Right ventricle myocardium inferior (tissue), 1 donor: ENCODE measurements at regions of chr10 and their contacts with region 1.

Region 1: GRCh38 chr10:124741281-124741921 is 2.8 kb downstream of the FAM53B start:
- DNase-seq: peak; percentile 90
- ATAC-seq: peak; percentile 72

Region 2: DNA sequence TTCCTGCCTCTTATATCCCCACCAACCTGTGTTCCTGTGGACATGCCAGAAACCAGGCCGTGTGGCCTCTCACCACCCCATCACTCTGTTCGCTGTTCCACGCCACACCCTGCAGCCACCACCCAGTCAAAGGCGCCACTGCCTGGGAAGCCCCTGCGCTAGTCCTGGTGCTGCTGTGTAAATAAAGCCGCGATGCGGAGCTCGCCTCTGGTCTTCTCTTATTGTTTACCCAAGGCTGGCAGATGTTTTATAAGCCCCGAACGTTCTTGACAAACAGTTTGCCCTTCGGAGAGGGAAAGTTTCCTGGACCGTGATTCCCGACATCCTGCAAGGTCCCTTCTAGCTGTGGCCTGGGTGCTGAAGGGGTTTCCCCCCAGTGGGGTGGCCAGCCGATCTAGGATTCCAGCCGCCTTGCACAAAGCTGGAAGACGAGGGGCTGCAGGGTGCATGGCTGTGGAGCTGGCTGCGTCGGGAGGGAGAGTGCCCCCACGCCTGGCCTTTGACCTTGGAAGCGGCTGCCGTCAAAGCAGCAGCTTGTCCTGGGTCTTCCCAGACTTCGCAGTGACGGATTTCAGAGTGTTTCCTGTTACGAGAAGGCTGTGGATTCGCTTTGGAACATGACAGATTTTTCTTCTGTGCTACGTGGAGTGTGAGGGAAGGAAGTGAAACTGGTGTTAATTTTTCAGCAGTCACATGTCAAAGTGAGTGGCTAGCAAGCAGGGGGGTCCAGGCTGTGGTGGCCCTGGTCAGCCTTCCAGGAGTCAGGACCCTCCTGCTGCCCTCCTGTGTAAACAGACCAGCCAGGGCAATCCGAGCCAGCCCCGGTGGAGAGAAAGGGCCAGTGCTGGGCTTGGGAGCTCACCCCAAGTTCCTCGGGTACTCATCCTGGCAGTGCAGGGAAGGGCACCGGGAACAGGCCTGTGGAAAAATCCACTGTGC is 218.2 kb before region 1 on chr10:
- intact Hi-C with region 1: no loop called
- DNase-seq: no peak
- ATAC-seq: no peak

Region 3: DNA sequence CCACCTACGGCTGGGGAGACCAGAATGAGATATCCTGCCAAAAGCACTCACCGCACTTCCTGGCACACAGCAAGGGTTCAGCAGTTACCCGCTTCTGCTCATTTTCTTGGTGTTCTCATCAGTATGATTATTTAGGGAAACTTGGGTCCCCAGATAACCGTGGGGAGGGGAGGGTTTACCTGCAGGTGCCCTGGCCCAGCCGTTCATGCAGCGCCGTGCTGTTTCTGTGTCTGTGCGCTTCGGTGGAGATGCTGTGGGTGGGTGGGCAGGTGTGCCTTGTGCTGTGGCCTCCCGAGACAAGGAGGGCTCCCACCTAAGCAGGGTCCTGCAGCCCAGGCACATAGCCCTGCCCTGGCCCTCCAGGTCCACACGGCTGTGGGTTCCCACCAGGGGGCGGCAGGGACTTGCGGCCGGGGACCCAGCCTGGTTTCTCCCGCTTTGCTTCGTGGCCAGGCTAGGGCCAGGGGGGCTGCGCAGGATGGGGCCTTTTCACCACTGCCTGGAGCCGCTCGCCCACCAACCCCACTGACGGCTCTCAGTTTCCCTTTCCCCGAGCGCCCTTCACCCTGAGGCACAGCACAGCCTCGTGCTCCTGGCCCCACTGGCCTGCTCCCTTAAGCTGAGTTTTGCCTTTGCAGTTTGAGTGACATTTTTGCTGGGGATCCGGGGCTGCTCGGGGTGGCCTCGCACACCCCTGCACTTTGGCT is 201.3 kb before region 1 on chr10:
- intact Hi-C with region 1: loop called (anchors 1 kb)
- DNase-seq: peak; percentile 86
- ATAC-seq: peak; percentile 87

Region 4: GRCh38 chr10:124619802-124620490 is 121.5 kb before region 1 on chr10:
- intact Hi-C with region 1: loop called (anchors 2 kb)
- DNase-seq: no peak
- ATAC-seq: no peak

Region 5: DNA sequence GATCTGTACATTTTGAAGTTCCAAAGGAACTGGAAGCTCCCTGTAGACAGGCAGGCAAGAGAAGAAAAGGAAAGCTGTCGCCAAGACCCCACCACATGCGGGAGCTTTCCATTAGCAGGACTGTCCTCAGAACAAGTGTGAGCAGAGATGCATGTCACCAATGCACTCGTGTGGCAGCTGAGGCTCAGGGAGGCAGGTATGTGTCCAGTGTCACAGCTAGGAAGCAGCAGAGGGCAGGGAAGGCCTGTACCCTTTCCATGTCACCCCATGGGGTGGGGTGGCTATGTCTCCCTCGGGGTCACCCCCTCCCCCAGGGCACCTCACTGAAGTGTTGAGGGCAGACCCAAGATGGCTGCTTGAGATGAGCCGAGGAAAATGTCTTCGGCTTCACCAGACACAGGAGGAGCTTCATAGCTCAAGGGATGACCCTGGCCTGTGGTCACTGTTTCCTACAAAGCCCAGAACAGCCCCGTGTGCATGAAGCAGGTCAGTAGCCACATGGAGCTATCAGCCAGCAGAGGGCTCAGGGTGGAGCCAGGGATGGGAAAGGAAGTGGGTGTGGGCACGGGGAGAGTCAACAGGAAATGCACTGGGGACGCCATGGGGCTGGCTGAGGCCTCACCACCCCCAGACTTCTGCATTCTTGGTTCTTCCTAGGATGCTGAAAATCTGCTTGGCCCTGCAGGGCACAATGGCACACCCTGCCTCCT is 93.8 kb before region 1 on chr10:
- intact Hi-C with region 1: loop called (anchors 5 kb)
- DNase-seq: peak; percentile 92
- ATAC-seq: peak; percentile 57

Region 6: DNA sequence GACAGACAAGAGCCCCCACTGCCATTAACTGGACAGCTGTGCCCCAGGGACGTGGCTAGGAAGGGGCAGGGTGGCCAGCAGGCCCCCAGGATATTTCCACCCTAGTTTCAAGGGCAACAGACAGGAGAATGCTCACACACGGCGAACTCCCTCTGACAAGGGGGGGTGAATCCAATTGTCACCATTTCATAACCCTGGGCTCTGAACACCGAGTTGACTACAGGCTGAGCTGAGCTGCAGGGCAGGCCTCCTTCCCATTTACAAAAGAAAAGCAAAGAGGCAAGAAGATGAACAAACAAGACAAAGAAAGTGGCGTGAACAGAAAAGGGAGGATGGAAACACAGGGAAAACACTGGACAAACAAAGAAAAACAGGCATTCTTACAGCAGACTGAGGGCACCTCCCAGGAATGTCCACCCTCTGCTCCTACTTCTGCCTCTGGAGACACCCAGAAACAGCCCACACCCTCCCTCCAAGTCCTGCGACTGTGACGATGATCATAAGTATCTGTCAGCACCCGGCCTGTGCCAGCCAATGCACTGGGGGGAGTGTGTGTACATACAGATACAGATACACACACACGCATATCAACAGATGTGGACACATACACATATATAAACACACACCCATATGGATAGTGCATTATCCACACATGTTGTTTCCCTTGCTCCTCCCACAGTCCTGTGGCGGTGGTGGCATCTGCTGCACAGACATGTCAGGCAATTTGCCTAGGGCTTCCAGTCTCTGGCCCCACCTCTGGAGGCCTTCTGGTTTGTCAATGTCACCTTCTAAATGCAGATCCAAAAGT is 63.4 kb before region 1 on chr10:
- intact Hi-C with region 1: loop called (anchors 2 kb)
- DNase-seq: no peak
- ATAC-seq: peak; percentile 79

Region 7: GRCh38 chr10:124701435-124701834 is 40.0 kb before region 1 on chr10:
- intact Hi-C with region 1: loop called (anchors 2 kb)
- DNase-seq: peak; percentile 95
- ATAC-seq: peak; percentile 86

Region 8: GRCh38 chr10:124722798-124723783 is 18.3 kb before region 1 on chr10:
- intact Hi-C with region 1: loop called (anchors 2 kb)
- DNase-seq: peak; percentile 78
- ATAC-seq: peak; percentile 68

Region 9: DNA sequence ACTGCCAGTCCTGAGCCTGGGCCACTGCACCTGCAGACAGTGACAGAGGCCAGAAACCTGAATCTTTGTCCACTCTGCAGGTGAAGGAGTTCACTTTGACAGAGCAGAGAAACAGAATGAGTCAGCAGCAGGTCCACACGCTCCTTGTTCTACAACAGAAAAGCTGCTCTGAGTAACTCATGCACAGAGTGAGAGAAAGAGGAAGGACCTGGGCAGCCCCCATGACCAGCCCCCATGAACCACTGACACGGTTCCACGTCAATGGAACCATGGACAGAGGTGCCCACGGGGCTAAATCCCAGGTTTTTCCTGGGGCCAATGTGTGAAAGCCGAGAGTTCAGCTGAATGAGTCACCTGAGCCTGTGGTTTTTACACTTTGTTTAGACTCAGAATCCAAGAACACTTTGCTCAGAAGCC is 459.7 kb after region 1 on chr10:
- intact Hi-C with region 1: no loop called
- DNase-seq: no peak
- ATAC-seq: no peak